ENCODE measurements at regions of chr1 and their contacts with region 1.

Region 1: GRCh38 chr1:66446261-66447001 is 87.5 kb upstream of the SGIP1 start:
- DNase-seq: peak; percentile 67
- ATAC-seq: peak; percentile 66
- H3K4me3 Mint-ChIP-seq: peak overlapping the region; percentile 76
- H3K27ac Mint-ChIP-seq: peak overlapping the region; percentile 96
- H3K4me1 Mint-ChIP-seq: peaks cover 25% of the 10 kb centered on the region
- H3K27me3 Mint-ChIP-seq: peaks cover 11% of the 10 kb centered on the region

Region 2: DNA sequence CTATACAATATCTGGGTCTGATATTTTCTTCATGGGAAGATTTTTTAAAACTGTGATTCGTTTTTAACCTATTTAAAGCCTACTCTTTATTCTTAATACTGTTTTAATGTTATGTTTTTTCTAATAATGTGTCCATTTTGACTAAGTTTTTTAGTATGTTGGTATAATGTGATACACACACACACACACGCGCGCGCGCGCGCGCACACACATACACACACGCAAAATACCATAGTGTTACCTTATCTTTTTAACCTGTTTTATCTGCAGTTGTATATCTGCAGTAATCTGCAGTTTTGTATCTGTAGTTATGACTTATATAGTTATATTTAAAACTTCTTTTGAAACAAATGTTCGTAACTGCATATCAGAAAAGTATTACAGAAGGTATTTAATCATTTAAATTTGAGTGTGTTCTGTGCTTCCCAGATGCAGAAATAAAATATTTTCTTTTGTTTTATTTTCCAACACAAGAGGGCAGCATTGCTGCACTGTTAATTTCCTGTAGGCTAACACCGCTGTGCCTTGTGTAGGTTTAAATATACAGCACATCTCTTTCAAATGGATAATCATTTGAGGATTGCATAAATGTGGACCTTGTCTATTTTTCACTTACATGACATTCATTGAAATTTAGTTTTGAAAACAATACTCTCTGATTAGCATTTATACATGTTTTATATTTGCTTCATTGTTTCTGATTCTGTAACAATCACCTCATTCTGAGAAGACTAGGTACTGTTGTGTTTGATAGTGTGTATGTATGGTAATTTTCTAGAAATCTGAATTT is 487.7 kb before region 1 on chr1:
- CTCF ChIA-PET with region 1: interaction called, 35 read pairs
- POLR2A ChIA-PET with region 1: no interaction called
- DNase-seq: peak; percentile 47
- ATAC-seq: peak; percentile 57
- H3K4me3 Mint-ChIP-seq: no peak overlapping the region
- H3K27ac Mint-ChIP-seq: no peak overlapping the region
- H3K4me1 Mint-ChIP-seq: no peaks in the 10 kb centered on the region
- H3K27me3 Mint-ChIP-seq: peaks cover 4% of the 10 kb centered on the region

Region 3: GRCh38 chr1:66265796-66266195 is 180.6 kb before region 1 on chr1:
- CTCF ChIA-PET with region 1: interaction called, 26 read pairs
- POLR2A ChIA-PET with region 1: no interaction called
- DNase-seq: no peak
- ATAC-seq: no peak
- H3K4me3 Mint-ChIP-seq: no peak overlapping the region
- H3K27ac Mint-ChIP-seq: no peak overlapping the region
- H3K4me1 Mint-ChIP-seq: peaks cover 47% of the 10 kb centered on the region
- H3K27me3 Mint-ChIP-seq: no peaks in the 10 kb centered on the region

Region 4: GRCh38 chr1:66300972-66301451 is 145.4 kb before region 1 on chr1:
- CTCF ChIA-PET with region 1: interaction called, 32 read pairs
- POLR2A ChIA-PET with region 1: no interaction called
- DNase-seq: peak; percentile 49
- ATAC-seq: peak; percentile 79
- H3K4me3 Mint-ChIP-seq: peak overlapping the region; percentile 77
- H3K27ac Mint-ChIP-seq: peak overlapping the region; percentile 88
- H3K4me1 Mint-ChIP-seq: peaks cover 41% of the 10 kb centered on the region
- H3K27me3 Mint-ChIP-seq: no peaks in the 10 kb centered on the region

Region 5: GRCh38 chr1:66360285-66360724 is 86.1 kb before region 1 on chr1:
- CTCF ChIA-PET with region 1: interaction called, 124 read pairs
- POLR2A ChIA-PET with region 1: interaction called, 4 read pairs
- DNase-seq: no peak
- ATAC-seq: no peak
- H3K4me3 Mint-ChIP-seq: no peak overlapping the region
- H3K27ac Mint-ChIP-seq: no peak overlapping the region
- H3K4me1 Mint-ChIP-seq: peaks cover 62% of the 10 kb centered on the region
- H3K27me3 Mint-ChIP-seq: no peaks in the 10 kb centered on the region

Region 6: GRCh38 chr1:66413136-66413837 is 33.1 kb before region 1 on chr1:
- CTCF ChIA-PET with region 1: interaction called, 12 read pairs
- POLR2A ChIA-PET with region 1: no interaction called
- DNase-seq: no peak
- ATAC-seq: no peak
- H3K4me3 Mint-ChIP-seq: no peak overlapping the region
- H3K27ac Mint-ChIP-seq: no peak overlapping the region
- H3K4me1 Mint-ChIP-seq: peaks cover 35% of the 10 kb centered on the region
- H3K27me3 Mint-ChIP-seq: no peaks in the 10 kb centered on the region

Measured in activated CD8-positive, alpha-beta T cell treated with anti-CD3 and anti-CD28 coated beads, Interleukin-2, amount 10 ng/mL, durations not matched to agents 7 days and 5 days (primary cell).